Activated CD4-positive, alpha-beta T cell treated with anti-CD3 and anti-CD28 coated beads, Interleukin-2, amount 10 ng/mL, durations not matched to agents 24 days and 14 days (primary cell): ENCODE measurements at regions of chr5 and their contacts with region 1.

Region 1: DNA sequence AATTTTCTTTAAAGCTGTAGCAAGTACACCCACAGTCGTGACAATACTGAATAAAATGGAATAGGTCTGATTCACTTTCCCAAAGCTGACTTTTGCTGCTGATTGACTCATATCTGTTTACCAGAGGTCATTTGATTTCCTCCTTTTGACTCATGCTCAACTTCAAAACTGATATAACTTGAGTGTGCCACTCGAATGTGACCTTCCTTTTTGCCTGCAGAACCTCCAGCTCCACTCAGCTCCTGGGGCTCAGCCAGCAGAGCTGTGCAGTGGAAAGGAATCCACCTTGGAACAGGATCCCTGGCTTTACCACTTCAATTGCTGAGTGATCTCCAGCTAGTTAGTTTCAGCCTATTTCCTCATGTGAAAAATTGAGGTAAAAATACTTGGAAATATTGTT is 84.1 kb downstream of the FEM1C start:
- DNase-seq: peak; percentile 60
- H3K4me3 Mint-ChIP-seq: no peak overlapping the region
- H3K27ac Mint-ChIP-seq: no peak overlapping the region
- H3K4me1 Mint-ChIP-seq: peaks cover 10% of the 10 kb centered on the region
- H3K27me3 Mint-ChIP-seq: peaks cover 15% of the 10 kb centered on the region

Region 2: GRCh38 chr5:115033861-115034260 is 426.6 kb before region 1 on chr5:
- intact Hi-C with region 1: no loop called
- DNase-seq: no peak
- H3K4me3 Mint-ChIP-seq: no peak overlapping the region
- H3K27ac Mint-ChIP-seq: no peak overlapping the region
- H3K4me1 Mint-ChIP-seq: no peaks in the 10 kb centered on the region
- H3K27me3 Mint-ChIP-seq: no peaks in the 10 kb centered on the region

Region 3: DNA sequence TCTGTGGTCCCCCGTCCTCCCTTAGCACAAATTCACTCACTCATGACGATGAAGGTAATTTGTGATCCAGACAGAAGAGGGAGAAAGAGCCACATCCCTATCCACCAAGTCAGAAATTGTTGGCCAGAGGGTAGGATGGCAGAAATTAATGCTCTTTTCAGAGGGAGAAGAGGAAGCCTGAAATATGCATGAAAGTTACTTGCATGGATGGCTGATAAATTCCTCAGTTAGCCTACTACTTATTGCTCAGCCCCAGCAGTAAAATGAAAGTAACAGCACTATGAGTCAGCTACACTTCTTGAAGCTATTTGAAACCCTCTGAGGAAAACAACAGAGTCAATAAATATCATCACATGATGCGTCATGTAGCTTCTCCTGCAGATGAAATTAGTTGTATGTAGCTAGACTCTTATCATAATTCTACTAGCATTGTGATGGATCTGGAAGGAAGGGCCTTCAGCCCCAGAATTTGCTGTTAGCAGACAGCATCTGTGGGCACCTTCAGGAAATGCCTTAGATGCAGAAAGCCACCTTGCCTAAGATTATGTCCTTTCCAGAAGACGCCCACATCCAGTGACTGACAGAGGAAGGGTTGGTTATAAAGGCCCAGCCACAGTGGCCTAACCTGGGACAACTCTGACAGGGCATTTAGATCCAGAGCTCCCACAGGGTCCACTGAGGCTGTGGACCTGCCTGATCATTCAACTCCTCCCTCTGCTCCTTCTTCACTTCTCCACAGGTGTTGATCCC is 82.8 kb before region 1 on chr5:
- intact Hi-C with region 1: loop called (anchors 1 kb)
- DNase-seq: no peak
- H3K4me3 Mint-ChIP-seq: no peak overlapping the region
- H3K27ac Mint-ChIP-seq: peak overlapping the region; percentile 4
- H3K4me1 Mint-ChIP-seq: peaks cover 17% of the 10 kb centered on the region
- H3K27me3 Mint-ChIP-seq: no peaks in the 10 kb centered on the region

Region 4: DNA sequence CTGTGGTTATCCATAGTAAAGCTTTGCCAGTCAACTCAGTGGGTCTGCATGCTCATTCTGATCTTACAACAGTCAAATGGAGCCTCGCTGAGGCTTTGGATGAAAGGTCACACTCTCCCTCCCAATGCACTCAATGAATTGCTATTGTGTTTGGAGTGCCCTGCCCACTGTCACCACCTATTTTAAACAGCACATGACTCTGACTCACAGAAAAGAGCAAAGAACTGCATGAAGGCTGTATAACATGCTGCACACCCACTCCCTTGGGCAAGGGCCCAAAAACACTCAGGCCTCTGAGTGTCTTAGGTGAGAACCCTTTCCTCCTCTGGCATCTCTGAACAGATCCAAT is 45.4 kb before region 1 on chr5:
- intact Hi-C with region 1: loop called (anchors 2 kb)
- DNase-seq: peak; percentile 50
- H3K4me3 Mint-ChIP-seq: no peak overlapping the region
- H3K27ac Mint-ChIP-seq: no peak overlapping the region
- H3K4me1 Mint-ChIP-seq: peaks cover 2% of the 10 kb centered on the region
- H3K27me3 Mint-ChIP-seq: no peaks in the 10 kb centered on the region

Region 5: GRCh38 chr5:115487756-115488155 is 27.3 kb after region 1 on chr5:
- intact Hi-C with region 1: loop called (anchors 1 kb)
- DNase-seq: no peak
- H3K4me3 Mint-ChIP-seq: no peak overlapping the region
- H3K27ac Mint-ChIP-seq: peak overlapping the region; percentile 50
- H3K4me1 Mint-ChIP-seq: peaks cover 8% of the 10 kb centered on the region
- H3K27me3 Mint-ChIP-seq: peaks cover under 1% of the 10 kb centered on the region

Region 6: GRCh38 chr5:115601701-115602590 is 141.5 kb after region 1 on chr5 and contains the start of gene TICAM2:
- intact Hi-C with region 1: loop called (anchors 10 kb)
- DNase-seq: peak; percentile 90
- H3K4me3 Mint-ChIP-seq: peak within 1 kb of the TSS; percentile 47
- H3K27ac Mint-ChIP-seq: peak within 1 kb of the TSS; percentile 62
- H3K4me1 Mint-ChIP-seq: peaks cover 25% of the 10 kb centered on the region
- H3K27me3 Mint-ChIP-seq: no peaks in the 10 kb centered on the region
- total RNA-seq, gene TICAM2: 0.86 and 1.0 TPM in 2 replicates